CD8-positive, alpha-beta T cell (primary cell): ENCODE measurements at regions of chr5 and their contacts with region 1.

Region 1: GRCh38 chr5:158074992-158075769 is 216.2 kb upstream of the CLINT1 start:
- DNase-seq: peak; percentile 7 to 66 (median 39)
- ATAC-seq: peak; percentile 64
- H3K4me3 ChIP-seq: no peak overlapping the region
- H3K4me3 Mint-ChIP-seq: no peak overlapping the region
- H3K27ac ChIP-seq: no peak overlapping the region
- H3K27ac Mint-ChIP-seq: no peak overlapping the region
- H3K4me1 ChIP-seq: no peaks in the 10 kb centered on the region
- H3K4me1 Mint-ChIP-seq: peaks cover 3% of the 10 kb centered on the region
- H3K27me3 ChIP-seq: no peaks in the 10 kb centered on the region
- H3K27me3 Mint-ChIP-seq: peaks cover 7% of the 10 kb centered on the region
- CTCF ChIP-seq: peak; percentile 54

Region 2: DNA sequence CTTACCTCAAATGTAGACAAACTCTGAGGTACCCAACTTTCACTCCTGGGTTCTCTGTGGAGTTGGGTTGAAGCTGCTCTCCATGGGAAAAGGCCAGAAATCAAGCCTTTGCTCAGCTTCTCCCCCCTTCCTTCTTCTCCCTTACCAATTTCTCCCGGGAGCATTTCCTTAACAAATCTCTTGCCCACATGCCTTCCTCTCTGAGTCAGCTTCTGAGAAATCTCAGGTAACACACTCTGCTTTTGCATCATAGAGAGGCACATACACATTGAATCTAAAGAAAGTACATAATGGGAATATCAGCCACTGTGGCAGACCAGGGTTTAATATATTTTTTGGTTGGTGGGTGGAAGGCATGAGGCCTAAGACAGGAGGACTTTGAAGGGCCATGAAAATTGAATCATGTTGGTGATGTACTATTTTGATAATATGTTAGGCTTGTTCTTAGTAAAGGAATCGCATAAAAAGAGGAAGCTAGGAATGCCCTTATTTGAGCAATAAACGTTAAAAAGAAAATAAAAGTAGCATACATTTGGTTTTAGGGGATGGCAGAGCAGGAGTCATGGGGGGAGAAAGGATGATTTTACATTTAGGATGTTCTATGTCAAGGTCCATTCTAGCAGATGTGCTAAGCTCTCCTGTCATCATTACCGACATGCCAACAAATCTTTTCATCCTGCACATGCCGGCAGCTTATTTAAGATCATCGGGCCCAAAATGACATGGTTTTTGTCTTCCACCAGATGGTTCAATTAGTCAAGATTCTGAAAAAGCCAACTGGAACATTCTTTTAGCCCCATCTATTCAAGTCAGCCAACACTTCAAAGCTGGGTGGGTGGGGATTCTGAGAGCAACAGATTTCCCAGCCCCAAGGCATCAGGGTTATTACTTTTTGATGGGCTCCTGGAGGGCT is 16.7 kb before region 1 on chr5:
- CTCF ChIA-PET with region 1: interaction called, 15 read pairs
- POLR2A ChIA-PET with region 1: no interaction called
- intact Hi-C with region 1: no loop called
- DNase-seq: no peak
- ATAC-seq: no peak
- H3K4me3 ChIP-seq: no peak overlapping the region
- H3K4me3 Mint-ChIP-seq: no peak overlapping the region
- H3K27ac ChIP-seq: no peak overlapping the region
- H3K27ac Mint-ChIP-seq: no peak overlapping the region
- H3K4me1 ChIP-seq: no peaks in the 10 kb centered on the region
- H3K4me1 Mint-ChIP-seq: no peaks in the 10 kb centered on the region
- H3K27me3 ChIP-seq: no peaks in the 10 kb centered on the region
- H3K27me3 Mint-ChIP-seq: peaks cover 19% of the 10 kb centered on the region
- CTCF ChIP-seq: no peak

Region 3: DNA sequence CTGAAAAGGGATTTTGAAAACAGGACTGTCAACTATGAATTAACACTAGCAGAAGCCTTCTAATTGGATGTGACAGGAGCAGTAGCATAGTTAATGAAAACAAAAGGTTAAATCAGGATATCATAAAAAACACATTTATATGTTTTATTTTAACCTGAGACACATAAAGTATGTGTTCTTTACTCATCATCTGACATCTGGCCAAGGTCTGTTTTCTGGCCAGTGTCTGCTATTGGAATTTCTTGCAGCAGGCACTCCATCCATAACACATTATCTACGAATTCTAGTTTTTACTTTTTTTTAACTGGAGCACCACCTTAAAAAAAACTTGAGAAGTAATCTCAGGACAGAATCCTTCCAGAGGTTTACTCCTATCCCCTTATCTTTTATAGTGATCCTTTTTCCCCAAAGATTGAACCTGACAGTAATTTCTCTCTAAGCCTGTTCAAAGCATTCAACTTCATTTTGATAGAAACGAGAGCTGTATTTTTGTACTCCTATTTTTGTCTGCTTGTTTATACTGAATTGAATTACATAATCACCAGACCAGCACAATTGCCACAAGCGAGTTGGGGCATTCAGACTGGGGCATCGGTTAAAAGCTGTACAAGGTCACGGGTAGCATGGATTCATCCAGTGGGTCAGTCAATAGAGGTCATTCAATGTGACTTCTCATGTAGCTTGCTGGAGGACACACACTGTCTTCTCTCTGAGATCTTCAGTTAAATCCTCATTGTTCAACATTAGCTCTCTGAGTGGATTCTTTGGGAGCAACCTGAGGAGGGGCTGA is 10.7 kb before region 1 on chr5:
- CTCF ChIA-PET with region 1: interaction called, 17 read pairs
- POLR2A ChIA-PET with region 1: no interaction called
- intact Hi-C with region 1: no loop called
- DNase-seq: no peak
- ATAC-seq: no peak
- H3K4me3 ChIP-seq: no peak overlapping the region
- H3K4me3 Mint-ChIP-seq: no peak overlapping the region
- H3K27ac ChIP-seq: no peak overlapping the region
- H3K27ac Mint-ChIP-seq: no peak overlapping the region
- H3K4me1 ChIP-seq: no peaks in the 10 kb centered on the region
- H3K4me1 Mint-ChIP-seq: peaks cover 3% of the 10 kb centered on the region
- H3K27me3 ChIP-seq: no peaks in the 10 kb centered on the region
- H3K27me3 Mint-ChIP-seq: peaks cover 8% of the 10 kb centered on the region
- CTCF ChIP-seq: no peak